ENCODE measurements at regions of chr6 and their contacts with region 1.

Region 1: DNA sequence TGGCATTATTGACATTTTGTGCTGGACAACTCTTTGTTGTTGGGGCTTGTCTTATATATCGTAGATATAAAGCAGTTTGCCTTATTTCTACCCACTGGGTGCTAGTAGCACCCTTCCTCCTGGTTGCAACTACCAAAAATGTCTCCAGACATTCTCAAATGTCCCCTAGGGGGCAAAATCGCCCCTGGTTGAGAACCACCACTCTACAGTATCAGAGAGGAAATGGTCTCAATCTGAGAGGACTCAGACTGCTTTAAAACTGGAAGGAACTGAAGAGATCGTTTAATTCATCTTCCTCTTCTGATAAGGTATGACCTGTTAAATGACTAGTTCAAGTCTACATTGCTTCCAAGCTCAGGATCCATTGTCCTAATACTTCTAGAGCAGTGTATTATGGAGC is 14.9 kb downstream of the SH3BGRL2 start:
- DNase-seq: no peak
- ATAC-seq: no peak

Region 2: GRCh38 chr6:79813854-79814709 is 168.1 kb after region 1 on chr6:
- intact Hi-C with region 1: no loop called
- DNase-seq: peak; percentile 89
- ATAC-seq: peak; percentile 80

Region 3: DNA sequence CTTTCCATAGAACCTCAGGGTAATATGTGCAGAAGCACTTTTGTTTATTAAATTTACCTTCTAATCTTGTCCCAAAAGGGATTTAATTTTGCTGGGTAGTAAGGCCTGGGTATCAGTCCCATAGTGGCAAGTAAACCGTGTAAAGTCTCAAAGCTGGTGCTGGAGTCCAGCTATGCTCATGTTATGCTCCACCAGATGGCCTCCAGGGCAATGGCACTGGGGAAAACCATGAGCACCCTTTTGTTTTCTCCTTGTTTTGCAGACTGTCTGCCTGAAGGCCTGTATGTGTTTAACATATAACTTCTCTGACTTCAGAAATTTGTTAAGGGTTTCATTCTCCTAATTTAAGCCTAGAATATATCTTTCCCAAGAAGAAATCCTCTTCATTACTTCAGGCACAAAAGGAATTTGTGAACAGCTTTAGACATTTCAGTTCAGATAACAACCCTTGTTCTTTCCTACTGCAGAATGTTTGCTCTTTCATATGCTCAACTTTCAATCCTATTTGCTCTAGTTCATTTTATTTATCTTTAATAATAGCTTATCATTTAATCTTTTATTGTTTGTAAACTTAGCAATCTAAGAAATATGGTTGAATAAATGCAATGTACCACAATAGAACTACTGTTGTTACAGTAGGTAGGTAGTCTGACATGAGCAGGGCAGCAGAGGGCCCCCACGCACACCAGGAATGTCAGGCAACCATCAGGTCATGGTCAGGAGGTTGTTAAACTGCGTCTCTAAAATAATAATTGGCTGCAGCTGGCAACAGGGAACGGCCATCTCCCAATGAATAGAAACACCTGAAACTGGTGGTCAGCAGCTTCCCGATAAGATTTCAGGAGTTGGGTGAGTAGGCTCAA is 1943.7 kb after region 1 on chr6:
- intact Hi-C with region 1: loop called (anchors 5 kb)
- DNase-seq: no peak
- ATAC-seq: no peak

Measured in sciatic nerve (tissue), 2 donors.